ENCODE measurements at regions of chr11 and their contacts with region 1.

Region 1: GRCh38 chr11:63906585-63906984 is 10.4 kb downstream of the RCOR2 start:
- DNase-seq: peak; percentile 62
- ATAC-seq: no peak
- H3K4me3 Mint-ChIP-seq: no peak overlapping the region
- H3K27ac Mint-ChIP-seq: peak overlapping the region; percentile 93
- H3K4me1 Mint-ChIP-seq: peaks cover 48% of the 10 kb centered on the region
- H3K27me3 Mint-ChIP-seq: no peaks in the 10 kb centered on the region
- CTCF ChIP-seq: peak; percentile 35; the same call in 1 of the 2 replicates

Region 2: DNA sequence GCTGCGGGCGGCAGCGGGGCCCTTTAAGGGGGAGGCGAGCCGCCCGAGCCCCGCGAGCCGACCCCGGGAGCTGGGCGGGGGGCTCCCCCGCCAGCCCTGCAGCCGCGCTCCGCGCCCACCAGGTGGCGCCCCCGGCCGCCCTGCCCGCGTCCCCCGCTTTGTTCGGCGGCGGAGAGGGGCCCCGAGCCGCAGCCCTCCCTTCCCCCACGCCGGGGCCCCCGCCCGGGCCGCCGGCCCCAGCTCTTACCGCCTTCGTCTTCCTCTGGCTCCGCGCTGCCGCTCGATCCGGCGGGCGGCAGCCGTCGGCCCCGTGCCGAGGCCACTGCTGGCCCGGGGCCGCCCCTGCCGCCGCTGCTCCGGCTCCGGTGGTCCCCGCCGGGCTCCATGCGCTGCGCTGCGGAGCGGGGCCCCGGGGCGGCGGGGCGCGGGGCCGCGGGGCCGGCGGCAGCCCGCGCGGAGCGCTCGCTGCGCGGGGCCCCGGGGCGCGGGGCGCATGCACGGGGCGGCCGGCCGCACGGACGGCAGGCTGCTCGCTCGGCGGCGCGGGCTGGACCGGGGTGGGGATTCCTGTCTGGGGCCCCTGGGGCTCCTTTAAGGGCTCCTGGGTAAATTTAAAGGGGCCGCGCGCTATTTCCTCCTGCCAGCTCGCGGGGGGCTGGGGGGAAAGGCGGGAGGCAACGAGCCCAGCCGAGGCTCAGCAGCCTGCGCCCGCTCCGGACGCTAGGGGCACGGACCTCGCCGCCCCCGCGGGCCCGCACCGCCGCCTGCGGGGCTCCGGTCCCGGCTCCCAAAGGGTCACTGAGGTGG is 138.1 kb before region 1 on chr11 and contains the start of gene ZFTA:
- CTCF ChIA-PET with region 1: interaction called, 10 read pairs
- POLR2A ChIA-PET with region 1: interaction called, 5 read pairs
- DNase-seq: peak; percentile 75
- ATAC-seq: peak; percentile 6
- H3K4me3 Mint-ChIP-seq: peak within 1 kb of the TSS; percentile 98
- H3K27ac Mint-ChIP-seq: peak within 1 kb of the TSS; percentile 98
- H3K4me1 Mint-ChIP-seq: peaks cover 37% of the 10 kb centered on the region
- H3K27me3 Mint-ChIP-seq: peaks cover 32% of the 10 kb centered on the region
- CTCF ChIP-seq: peak; percentile 78
- total RNA-seq, gene ZFTA: 44.7 to 47.2 TPM (median 45.6 TPM) in 3 replicates

Region 3: GRCh38 chr11:63829823-63830489 is 76.6 kb before region 1 on chr11:
- CTCF ChIA-PET with region 1: interaction called, 10 read pairs
- POLR2A ChIA-PET with region 1: no interaction called
- DNase-seq: peak; percentile 62
- ATAC-seq: peak; percentile 87
- H3K4me3 Mint-ChIP-seq: no peak overlapping the region
- H3K27ac Mint-ChIP-seq: peak overlapping the region; percentile 47; the same call in 1 of the 2 replicates
- H3K4me1 Mint-ChIP-seq: peaks cover 30% of the 10 kb centered on the region
- H3K27me3 Mint-ChIP-seq: no peaks in the 10 kb centered on the region; the same call in 1 of the 2 replicates
- CTCF ChIP-seq: no peak

Region 4: GRCh38 chr11:63838678-63839507 is 67.7 kb before region 1 on chr11 and contains the start of gene MARK2:
- CTCF ChIA-PET with region 1: interaction called, 47 read pairs
- POLR2A ChIA-PET with region 1: interaction called, 3 read pairs
- DNase-seq: peak; percentile 99
- ATAC-seq: peak; percentile 88
- H3K4me3 Mint-ChIP-seq: peak within 1 kb of the TSS; percentile 90
- H3K27ac Mint-ChIP-seq: peak within 1 kb of the TSS; percentile 93
- H3K4me1 Mint-ChIP-seq: peaks cover 58% of the 10 kb centered on the region
- H3K27me3 Mint-ChIP-seq: no peaks in the 10 kb centered on the region
- CTCF ChIP-seq: no peak
- total RNA-seq, gene MARK2: 50.8 to 57.4 TPM (median 51.4 TPM) in 3 replicates

Region 5: DNA sequence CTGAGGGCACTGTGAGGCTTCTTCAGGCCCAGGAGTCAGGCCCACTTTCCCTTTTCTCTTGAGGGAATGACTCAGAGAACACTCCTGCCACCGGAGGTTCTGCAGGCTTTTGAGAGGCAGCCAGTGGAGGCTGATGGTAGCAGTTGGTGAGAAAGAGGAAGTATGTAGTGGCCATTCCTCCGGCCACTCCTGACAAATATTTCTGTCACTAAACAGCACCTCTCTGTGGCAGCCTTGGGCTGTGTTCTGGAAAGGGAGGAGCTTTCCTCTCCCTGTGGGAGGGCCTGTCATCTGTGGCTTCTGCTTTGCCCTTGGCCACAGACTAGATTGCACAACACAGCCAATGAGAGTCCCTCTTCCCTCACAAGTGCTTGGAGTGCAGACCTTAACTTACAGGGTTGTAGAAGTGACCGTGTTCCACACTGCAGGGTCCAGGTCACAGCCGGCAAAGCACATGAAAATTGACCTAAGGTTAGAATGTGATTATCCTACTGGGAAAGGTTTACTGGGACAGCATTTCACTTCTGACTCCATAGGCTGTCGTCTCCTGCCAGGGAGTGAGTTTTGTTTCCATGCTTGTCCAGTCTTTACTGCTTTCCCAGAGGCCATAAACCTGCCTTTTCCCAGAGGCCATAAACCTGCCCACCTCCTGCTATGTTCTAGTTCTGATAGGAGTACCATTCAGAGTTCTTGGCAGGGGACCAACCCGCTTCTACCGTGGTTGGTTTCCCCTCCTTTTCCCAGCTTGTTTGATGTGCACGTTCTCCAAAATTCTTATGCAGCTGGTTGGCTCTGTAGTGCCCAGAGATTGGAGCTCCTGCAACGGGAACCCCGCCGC is 34.4 kb before region 1 on chr11:
- CTCF ChIA-PET with region 1: interaction called, 12 read pairs
- POLR2A ChIA-PET with region 1: no interaction called
- DNase-seq: peak; percentile 55
- ATAC-seq: peak; percentile 86
- H3K4me3 Mint-ChIP-seq: no peak overlapping the region
- H3K27ac Mint-ChIP-seq: peak overlapping the region; percentile 94
- H3K4me1 Mint-ChIP-seq: peaks cover 55% of the 10 kb centered on the region
- H3K27me3 Mint-ChIP-seq: no peaks in the 10 kb centered on the region
- CTCF ChIP-seq: no peak

Region 6: DNA sequence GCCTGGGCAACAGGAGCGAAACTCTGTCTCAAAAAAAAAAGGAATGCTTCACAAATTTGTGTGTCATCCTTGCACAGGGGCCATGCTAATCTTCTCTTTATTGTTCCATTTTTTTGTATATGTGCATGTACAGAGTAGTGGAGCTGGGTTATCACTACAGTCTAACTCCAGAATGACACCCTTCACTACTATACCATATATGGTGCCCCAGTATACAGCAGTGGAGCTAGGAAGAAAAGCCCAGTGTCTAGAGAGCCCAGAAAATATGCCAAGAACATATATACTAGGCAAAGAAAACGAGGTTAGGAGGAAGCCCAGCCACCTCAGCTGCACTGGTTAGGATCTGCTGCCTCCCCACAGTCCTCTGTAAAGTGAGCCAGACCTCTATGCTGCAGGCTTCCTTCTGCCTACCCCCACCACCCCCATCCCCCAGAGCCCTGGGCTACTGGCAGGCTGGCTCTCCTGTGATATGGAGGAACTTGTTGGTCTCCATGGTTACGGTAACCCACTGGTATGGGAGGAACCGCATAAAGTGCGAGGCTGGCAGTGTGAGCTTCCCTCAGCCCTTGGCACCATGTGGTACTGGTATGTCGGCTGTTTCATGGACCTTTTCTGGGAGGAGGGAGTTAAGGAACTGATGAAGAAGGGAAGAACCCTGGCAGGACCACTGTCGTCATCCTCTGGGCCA is 23.9 kb before region 1 on chr11:
- CTCF ChIA-PET with region 1: interaction called, 14 read pairs
- POLR2A ChIA-PET with region 1: interaction called, 3 read pairs
- DNase-seq: peak; percentile 68
- ATAC-seq: peak; percentile 88
- H3K4me3 Mint-ChIP-seq: no peak overlapping the region
- H3K27ac Mint-ChIP-seq: peak overlapping the region; percentile 84; the same call in 1 of the 2 replicates
- H3K4me1 Mint-ChIP-seq: peaks cover 69% of the 10 kb centered on the region
- H3K27me3 Mint-ChIP-seq: no peaks in the 10 kb centered on the region; the same call in 1 of the 2 replicates
- CTCF ChIP-seq: no peak